ENCODE measurements at regions of chr5 and their contacts with region 1.

Region 1: GRCh38 chr5:81165493-81166119 is 67.5 kb upstream of the CKMT2 start:
- DNase-seq: peak; percentile 81
- H3K4me3 ChIP-seq: no peak overlapping the region
- H3K4me3 Mint-ChIP-seq: no peak overlapping the region
- H3K27ac Mint-ChIP-seq: no peak overlapping the region
- H3K4me1 ChIP-seq: no peaks in the 10 kb centered on the region
- H3K4me1 Mint-ChIP-seq: no peaks in the 10 kb centered on the region
- H3K27me3 ChIP-seq: no peaks in the 10 kb centered on the region
- H3K27me3 Mint-ChIP-seq: no peaks in the 10 kb centered on the region
- CTCF ChIP-seq: peak; percentile 70 to 89

Region 2: GRCh38 chr5:80686757-80687156 is 478.8 kb before region 1 on chr5:
- CTCF ChIA-PET with region 1: no interaction called
- POLR2A ChIA-PET with region 1: no interaction called
- intact Hi-C with region 1: loop called (anchors 1 kb)
- DNase-seq: no peak
- H3K4me3 ChIP-seq: no peak overlapping the region
- H3K4me3 Mint-ChIP-seq: no peak overlapping the region
- H3K27ac Mint-ChIP-seq: no peak overlapping the region
- H3K4me1 ChIP-seq: no peaks in the 10 kb centered on the region
- H3K4me1 Mint-ChIP-seq: no peaks in the 10 kb centered on the region
- H3K27me3 ChIP-seq: no peaks in the 10 kb centered on the region
- H3K27me3 Mint-ChIP-seq: no peaks in the 10 kb centered on the region
- CTCF ChIP-seq: peak; percentile 33 to 34

Region 3: GRCh38 chr5:80711938-80712337 is 453.7 kb before region 1 on chr5:
- CTCF ChIA-PET with region 1: no interaction called
- POLR2A ChIA-PET with region 1: no interaction called
- intact Hi-C with region 1: loop called (anchors 1 kb)
- DNase-seq: peak; percentile 59 to 62
- H3K4me3 ChIP-seq: no peak overlapping the region
- H3K4me3 Mint-ChIP-seq: no peak overlapping the region
- H3K27ac Mint-ChIP-seq: no peak overlapping the region
- H3K4me1 ChIP-seq: peaks cover 4% of the 10 kb centered on the region; the same call in 1 of the 2 replicates
- H3K4me1 Mint-ChIP-seq: no peaks in the 10 kb centered on the region
- H3K27me3 ChIP-seq: no peaks in the 10 kb centered on the region
- H3K27me3 Mint-ChIP-seq: no peaks in the 10 kb centered on the region
- CTCF ChIP-seq: peak; percentile 57 to 60